ENCODE measurements at regions of chr2 and their contacts with region 1.

Region 1: DNA sequence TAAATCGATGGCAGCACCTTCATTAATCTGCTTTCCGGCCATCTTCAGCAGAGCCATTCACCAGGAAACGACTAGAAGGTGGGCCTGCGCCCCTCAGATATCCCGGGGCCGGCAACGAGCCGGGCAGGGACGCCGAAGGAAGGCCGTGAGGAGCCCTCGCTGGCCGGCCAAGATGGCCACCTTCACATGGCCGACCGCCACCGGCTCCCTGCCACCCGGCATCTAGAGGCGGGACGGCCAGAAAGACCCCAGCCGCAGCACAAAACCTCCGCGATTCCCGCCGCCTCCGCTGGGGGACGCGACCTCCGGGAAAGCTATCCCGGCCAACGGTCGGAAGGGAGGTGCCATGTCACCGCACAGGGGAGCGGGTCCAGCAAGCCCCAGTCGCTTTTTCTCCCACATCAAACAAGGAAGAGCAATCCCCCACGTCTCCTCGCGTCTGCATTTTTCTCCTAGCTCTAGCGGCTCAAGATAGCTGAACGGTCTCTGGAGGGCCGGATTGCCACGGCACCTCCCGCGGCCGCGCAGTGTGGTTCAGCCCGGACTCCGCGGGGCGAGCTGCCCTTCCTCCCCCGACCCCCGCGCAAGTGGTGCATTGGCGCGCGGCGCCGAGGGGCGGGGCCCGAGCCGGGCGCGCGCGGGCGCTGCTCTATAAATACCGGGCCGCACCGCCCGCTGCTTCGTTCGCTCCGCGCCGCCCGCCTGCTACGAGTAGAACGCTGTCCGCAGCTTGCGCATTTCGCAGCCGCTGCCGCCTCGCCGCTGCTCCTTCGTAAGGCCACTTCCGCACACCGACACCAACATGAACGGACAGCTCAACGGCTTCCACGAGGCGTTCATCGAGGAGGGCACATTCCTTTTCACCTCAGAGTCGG is at the start of gene MAT2A:
- DNase-seq: peak; percentile 93
- H3K4me3 ChIP-seq: peak within 1 kb of the TSS; percentile 84 to 96 (median 84)
- H3K27ac ChIP-seq: peak within 1 kb of the TSS; percentile 94
- H3K4me1 ChIP-seq: peaks cover 42% of the 10 kb centered on the region
- H3K27me3 ChIP-seq: no peaks in the 10 kb centered on the region
- CTCF ChIP-seq: peak; percentile 74 to 86
- POLR2A ChIP-seq: peak; percentile 100
- total RNA-seq, gene MAT2A: 236 and 257 TPM in 2 replicates

Region 2: GRCh38 chr2:85354286-85355072 is 184.2 kb before region 1 on chr2 and contains the starts of genes ELMOD3 and RETSAT:
- CTCF ChIA-PET with region 1: interaction called, 3 read pairs
- POLR2A ChIA-PET with region 1: interaction called, 22 read pairs
- dilution Hi-C with region 1: no loop called
- intact Hi-C with region 1: no loop called
- DNase-seq: peak; percentile 99
- H3K4me3 ChIP-seq: peak within 1 kb of the TSS; percentile 78 to 97 (median 87)
- H3K27ac ChIP-seq: peak within 1 kb of the TSS; percentile 44
- H3K4me1 ChIP-seq: peaks cover 8% of the 10 kb centered on the region
- H3K27me3 ChIP-seq: no peaks in the 10 kb centered on the region
- CTCF ChIP-seq: no peak
- POLR2A ChIP-seq: peak; percentile 98
- total RNA-seq, gene ELMOD3: 12.3 and 18.5 TPM in 2 replicates
- total RNA-seq, gene RETSAT: 49.9 and 59.1 TPM in 2 replicates

Region 3: DNA sequence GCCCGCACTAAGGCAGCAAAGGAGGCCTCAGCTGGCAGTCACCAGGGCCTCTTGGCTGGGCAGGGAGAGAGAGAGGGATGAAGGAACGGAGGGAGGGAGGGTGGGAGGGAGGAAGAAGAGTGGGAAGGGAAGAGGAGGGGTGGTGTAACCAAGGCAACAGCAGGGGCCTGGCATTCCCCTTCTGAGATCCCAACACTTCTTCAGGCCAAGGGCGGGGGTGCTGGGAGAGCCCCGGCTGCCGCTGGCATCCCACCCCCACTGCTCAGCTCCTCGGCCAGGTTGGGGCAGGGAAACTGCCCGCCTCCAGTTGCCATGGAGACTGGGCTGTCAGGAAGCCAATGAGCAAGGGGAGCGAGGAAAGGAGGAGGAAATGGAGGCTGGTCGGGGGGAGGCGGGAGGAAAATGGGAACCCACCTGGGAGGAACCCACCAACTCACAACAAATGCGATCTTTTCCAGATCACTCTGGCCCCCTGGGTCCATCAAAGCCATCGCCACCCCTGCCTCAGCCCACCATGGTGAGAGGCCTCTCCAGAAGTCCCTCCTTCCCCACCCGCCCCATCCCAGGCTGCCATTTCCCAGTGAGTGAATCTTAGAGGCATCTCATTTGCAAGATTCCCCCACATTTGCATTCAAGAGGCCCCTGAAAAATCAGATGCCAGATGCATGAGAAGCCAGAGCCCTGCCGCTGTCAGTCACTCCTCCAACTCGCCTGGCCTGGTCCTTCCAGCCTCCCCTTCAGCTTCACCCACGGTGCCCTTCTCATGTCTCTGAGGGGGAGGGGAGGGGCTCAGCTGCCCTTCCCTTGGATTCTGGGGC is 107.8 kb before region 1 on chr2:
- CTCF ChIA-PET with region 1: interaction called, 15 read pairs
- POLR2A ChIA-PET with region 1: interaction called, 26 read pairs
- dilution Hi-C with region 1: no loop called
- intact Hi-C with region 1: no loop called
- DNase-seq: no peak
- H3K4me3 ChIP-seq: no peak overlapping the region
- H3K27ac ChIP-seq: no peak overlapping the region
- H3K4me1 ChIP-seq: no peaks in the 10 kb centered on the region
- H3K27me3 ChIP-seq: no peaks in the 10 kb centered on the region
- CTCF ChIP-seq: no peak
- POLR2A ChIP-seq: no peak

Region 4: GRCh38 chr2:85445316-85446295 is 93.1 kb before region 1 on chr2:
- CTCF ChIA-PET with region 1: no interaction called
- POLR2A ChIA-PET with region 1: interaction called, 12 read pairs
- dilution Hi-C with region 1: no loop called
- intact Hi-C with region 1: no loop called
- DNase-seq: no peak
- H3K4me3 ChIP-seq: no peak overlapping the region
- H3K27ac ChIP-seq: no peak overlapping the region
- H3K4me1 ChIP-seq: no peaks in the 10 kb centered on the region
- H3K27me3 ChIP-seq: no peaks in the 10 kb centered on the region
- CTCF ChIP-seq: no peak
- POLR2A ChIP-seq: no peak

Region 5: GRCh38 chr2:85504778-85505323 is 33.9 kb before region 1 on chr2:
- CTCF ChIA-PET with region 1: interaction called, 16 read pairs
- POLR2A ChIA-PET with region 1: interaction called, 48 read pairs
- dilution Hi-C with region 1: no loop called
- intact Hi-C with region 1: loop called (anchors 1 kb)
- DNase-seq: peak; percentile 96
- H3K4me3 ChIP-seq: no peak overlapping the region
- H3K27ac ChIP-seq: peak overlapping the region; percentile 39
- H3K4me1 ChIP-seq: peaks cover 41% of the 10 kb centered on the region
- H3K27me3 ChIP-seq: no peaks in the 10 kb centered on the region
- CTCF ChIP-seq: no peak
- POLR2A ChIP-seq: peak; percentile 32

Region 6: DNA sequence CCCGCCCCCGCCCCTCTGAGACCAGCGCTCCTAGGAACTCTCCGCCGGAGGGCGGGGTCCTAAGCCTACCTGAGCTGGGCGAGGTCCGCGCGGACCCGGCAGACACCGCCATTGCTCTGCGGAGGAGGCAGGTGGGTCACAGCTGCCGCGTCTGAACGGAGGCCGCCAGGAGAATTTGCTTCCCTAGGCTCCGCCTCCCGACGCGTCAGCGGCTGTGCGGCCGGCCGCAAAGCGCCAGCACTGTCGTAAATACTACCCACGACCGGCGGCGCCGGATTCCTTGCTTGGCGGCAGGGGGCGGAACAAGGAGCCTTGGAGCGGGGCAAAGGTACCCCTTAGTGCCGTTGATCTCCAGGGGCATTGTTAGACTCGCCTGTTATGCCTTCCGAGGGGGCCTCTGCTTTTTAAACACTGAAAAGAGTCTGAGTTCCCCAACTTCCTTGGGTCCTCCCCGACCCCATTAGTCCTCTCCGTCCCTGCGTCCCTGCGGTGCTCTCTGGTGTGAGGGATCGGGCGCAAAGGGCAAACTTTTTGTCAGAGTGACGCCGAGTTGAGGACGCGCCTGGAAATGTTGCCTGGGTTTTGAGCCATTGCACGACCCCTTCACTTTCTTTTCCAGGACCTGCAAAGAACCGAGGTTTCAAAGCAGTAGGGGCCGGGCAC is 22.7 kb after region 1 on chr2 and contains the start of gene GGCX:
- CTCF ChIA-PET with region 1: no interaction called
- POLR2A ChIA-PET with region 1: interaction called, 8 read pairs
- dilution Hi-C with region 1: no loop called
- intact Hi-C with region 1: loop called (anchors 1 kb)
- DNase-seq: peak; percentile 96
- H3K4me3 ChIP-seq: peak within 1 kb of the TSS; percentile 69 to 82 (median 72)
- H3K27ac ChIP-seq: peak within 1 kb of the TSS; percentile 44
- H3K4me1 ChIP-seq: peaks cover 9% of the 10 kb centered on the region
- H3K27me3 ChIP-seq: no peaks in the 10 kb centered on the region
- CTCF ChIP-seq: peak in 1 of 2 donors; percentile 5
- POLR2A ChIP-seq: peak; percentile 95
- total RNA-seq, gene GGCX: 44.5 and 48.0 TPM in 2 replicates

Region 7: GRCh38 chr2:85628658-85629057 is 89.9 kb after region 1 on chr2:
- CTCF ChIA-PET with region 1: no interaction called
- POLR2A ChIA-PET with region 1: no interaction called
- dilution Hi-C with region 1: no loop called
- intact Hi-C with region 1: no loop called
- DNase-seq: no peak
- H3K4me3 ChIP-seq: no peak overlapping the region
- H3K27ac ChIP-seq: no peak overlapping the region
- H3K4me1 ChIP-seq: no peaks in the 10 kb centered on the region
- H3K27me3 ChIP-seq: no peaks in the 10 kb centered on the region
- CTCF ChIP-seq: no peak
- POLR2A ChIP-seq: no peak

Measured in endothelial cell of umbilical vein (primary cell).